Right ventricle myocardium superior (tissue), 1 donor: ENCODE measurements at regions of chr10 and their contacts with region 1.

Region 1: DNA sequence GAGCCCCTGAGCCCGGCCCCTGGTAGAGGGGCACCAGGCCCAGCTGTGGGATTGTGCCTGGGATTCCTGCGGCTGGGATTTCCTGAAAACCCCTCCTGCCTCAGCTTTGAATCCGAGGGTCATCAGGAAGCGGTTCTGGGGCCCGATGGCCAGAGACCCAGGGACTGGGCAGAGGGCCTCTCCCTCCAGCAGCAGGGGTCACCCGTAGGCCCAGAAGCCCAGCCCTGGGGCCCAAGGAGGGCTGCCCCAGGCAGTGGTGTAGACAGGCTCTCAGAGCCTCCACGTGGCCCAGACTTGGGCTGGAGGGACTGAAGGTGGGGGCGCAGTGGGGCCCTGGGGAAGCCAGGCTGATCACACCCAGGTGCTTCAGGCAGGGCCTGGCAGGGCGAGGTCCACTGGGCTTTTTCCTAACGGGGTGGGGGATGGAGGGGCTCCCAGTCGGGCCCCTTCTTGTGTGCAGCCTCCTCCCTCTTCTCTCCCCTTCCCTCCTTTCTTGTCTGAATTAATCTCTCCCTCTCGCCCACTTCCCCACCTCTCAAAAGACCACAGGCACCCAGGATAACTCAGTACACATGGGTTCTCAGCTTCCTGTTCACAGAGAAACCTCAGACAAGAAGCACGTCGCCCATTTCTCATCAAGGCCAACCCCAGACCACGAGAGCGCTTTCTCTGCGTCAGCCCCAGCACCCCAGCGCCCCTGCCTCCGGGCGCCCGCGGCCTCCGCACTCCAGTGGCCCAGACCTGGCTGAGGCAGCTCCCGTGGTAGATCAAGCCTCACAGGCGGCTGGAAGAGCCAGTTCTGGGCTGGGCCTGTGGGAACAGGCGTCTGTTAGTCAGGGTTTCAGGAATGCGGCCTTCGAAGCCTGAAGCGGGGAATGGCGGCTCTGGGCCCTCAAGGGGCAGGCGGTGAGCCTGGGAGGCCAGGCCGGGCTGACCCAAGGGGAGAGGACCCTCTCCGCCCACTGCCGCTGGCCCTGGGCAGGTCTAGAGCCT is 50.5 kb downstream of the PWWP2B start:
- DNase-seq: no peak
- ATAC-seq: peak; percentile 2

Region 2: GRCh38 chr10:132396495-132397035 is 50.9 kb before region 1 on chr10:
- intact Hi-C with region 1: loop called (anchors 2 kb)
- DNase-seq: peak; percentile 76
- ATAC-seq: peak; percentile 48